ENCODE measurements at regions of chrX and their contacts with region 1.

Region 1: GRCh38 chrX:114619874-114620273 is 36.0 kb downstream of the HTR2C start:
- DNase-seq: no peak
- H3K4me3 ChIP-seq: no peak overlapping the region
- H3K27ac ChIP-seq: no peak overlapping the region
- H3K4me1 ChIP-seq: no peaks in the 10 kb centered on the region
- H3K27me3 ChIP-seq: no peaks in the 10 kb centered on the region
- CTCF ChIP-seq: peak in 1 of 4 experiments; percentile 11
- POLR2A ChIP-seq: no peak

Region 2: GRCh38 chrX:114959729-114960128 is 339.9 kb after region 1 on chrX:
- intact Hi-C with region 1: loop called (anchors 10 kb)
- DNase-seq: no peak
- H3K4me3 ChIP-seq: no peak overlapping the region
- H3K27ac ChIP-seq: no peak overlapping the region
- H3K4me1 ChIP-seq: no peaks in the 10 kb centered on the region
- H3K27me3 ChIP-seq: no peaks in the 10 kb centered on the region
- CTCF ChIP-seq: peak in 3 of 4 experiments; percentile 20 to 42 (median 31)
- POLR2A ChIP-seq: no peak

Measured in prostate gland (tissue), 2 donors.